PC-3 (cell line): ENCODE measurements at regions of chr6 and their contacts with region 1.

Region 1: DNA sequence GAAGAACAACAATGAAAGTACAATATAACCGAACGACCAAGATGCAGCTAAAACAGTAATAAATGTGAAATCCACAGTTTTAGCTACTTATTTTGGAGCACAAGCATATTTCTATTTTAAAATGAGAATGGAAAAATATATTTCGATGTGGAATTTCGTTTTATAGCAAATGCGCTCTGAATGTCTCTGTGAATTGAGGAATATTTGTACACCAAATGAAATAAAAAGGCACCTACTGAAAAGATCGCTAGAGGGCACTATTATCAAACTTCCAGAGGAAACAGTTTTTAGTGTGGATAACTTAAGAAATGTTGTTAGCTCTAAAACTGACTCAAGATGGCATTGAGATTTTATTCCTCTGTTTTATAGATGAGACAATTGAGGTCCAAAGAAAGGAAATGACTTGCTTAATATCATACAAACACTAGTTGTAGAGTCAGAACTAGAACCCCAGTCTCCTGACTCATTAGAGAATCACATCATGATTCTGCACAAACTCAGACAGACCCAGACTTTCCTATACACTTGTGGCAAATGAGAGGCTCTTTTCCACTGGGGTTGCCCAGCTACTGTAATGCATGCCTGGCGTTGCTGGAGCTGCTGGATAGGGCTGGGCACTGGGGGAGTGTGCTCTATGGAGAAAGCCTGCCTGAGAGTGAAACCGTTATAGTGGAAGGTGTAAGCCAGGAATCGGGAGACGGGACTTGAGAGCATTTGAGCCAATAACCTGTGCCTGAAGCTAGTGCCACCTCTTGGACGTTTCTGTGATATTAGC is 51.9 kb downstream of the GCLC start:
- DNase-seq: peak; percentile 84
- ATAC-seq: peak; percentile 72
- H3K4me3 ChIP-seq: peak overlapping the region; percentile 69
- H3K27ac ChIP-seq: no peak overlapping the region
- H3K4me1 ChIP-seq: peaks cover 33% of the 10 kb centered on the region
- H3K27me3 ChIP-seq: no peaks in the 10 kb centered on the region
- CTCF ChIP-seq: peak; percentile 88

Region 2: GRCh38 chr6:53527249-53527765 is 34.3 kb after region 1 on chr6:
- CTCF ChIA-PET with region 1: interaction called, 18 read pairs
- POLR2A ChIA-PET with region 1: no interaction called
- intact Hi-C with region 1: no loop called
- DNase-seq: no peak
- ATAC-seq: no peak
- H3K4me3 ChIP-seq: no peak overlapping the region
- H3K27ac ChIP-seq: no peak overlapping the region
- H3K4me1 ChIP-seq: peaks cover 22% of the 10 kb centered on the region
- H3K27me3 ChIP-seq: no peaks in the 10 kb centered on the region
- CTCF ChIP-seq: no peak

Region 3: DNA sequence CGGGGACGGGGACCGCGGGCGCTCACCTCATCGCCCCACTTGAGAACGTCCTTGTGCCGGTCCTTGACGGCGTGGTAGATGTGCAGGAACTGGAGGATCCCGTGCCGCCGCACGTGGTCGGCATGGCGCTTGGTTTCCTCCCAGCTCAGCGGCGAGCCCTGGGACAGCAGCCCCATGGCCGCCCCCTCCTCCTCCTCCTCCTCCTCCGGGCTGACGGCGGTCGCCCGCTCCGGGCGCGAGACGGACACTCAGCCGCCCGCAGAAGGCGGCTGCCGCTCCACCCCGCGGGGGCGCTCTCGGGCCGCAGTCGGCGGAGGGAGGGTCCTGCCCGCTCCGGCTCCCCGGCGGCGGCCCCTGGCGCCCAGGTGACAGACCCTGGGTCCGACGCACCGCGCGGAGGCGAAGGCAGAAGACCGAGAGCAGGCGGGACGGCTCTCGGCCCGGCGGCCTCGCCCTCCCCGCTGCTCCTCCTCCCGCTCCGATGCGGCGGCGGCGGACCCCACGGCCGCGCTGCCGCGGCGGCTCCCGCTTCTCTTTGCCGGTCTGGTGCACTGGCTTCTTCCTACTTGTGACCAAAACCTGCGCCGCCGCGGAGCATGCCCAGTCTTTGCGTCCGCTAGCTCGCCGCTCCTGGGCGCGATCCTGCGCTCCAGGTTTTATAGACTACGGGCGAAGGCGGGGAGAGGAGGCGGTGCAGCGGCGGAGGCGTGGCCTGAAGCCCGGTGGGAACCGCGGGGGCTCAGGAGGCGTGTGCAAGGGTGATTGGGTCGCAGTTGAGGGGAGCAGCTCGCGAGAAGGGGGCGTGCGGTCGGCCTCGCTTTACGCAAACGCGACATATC is 51.6 kb after region 1 on chr6 and contains the start of gene GCLC:
- CTCF ChIA-PET with region 1: interaction called, 7 read pairs
- POLR2A ChIA-PET with region 1: no interaction called
- intact Hi-C with region 1: loop called (anchors 1 kb)
- DNase-seq: peak; percentile 96
- ATAC-seq: peak; percentile 55
- H3K4me3 ChIP-seq: peak within 1 kb of the TSS; percentile 92
- H3K27ac ChIP-seq: peak within 1 kb of the TSS; percentile 56
- H3K4me1 ChIP-seq: peaks cover 42% of the 10 kb centered on the region
- H3K27me3 ChIP-seq: no peaks in the 10 kb centered on the region
- CTCF ChIP-seq: peak; percentile 65
- total RNA-seq, gene GCLC: 50.1 and 54.7 TPM in 2 replicates

Region 4: DNA sequence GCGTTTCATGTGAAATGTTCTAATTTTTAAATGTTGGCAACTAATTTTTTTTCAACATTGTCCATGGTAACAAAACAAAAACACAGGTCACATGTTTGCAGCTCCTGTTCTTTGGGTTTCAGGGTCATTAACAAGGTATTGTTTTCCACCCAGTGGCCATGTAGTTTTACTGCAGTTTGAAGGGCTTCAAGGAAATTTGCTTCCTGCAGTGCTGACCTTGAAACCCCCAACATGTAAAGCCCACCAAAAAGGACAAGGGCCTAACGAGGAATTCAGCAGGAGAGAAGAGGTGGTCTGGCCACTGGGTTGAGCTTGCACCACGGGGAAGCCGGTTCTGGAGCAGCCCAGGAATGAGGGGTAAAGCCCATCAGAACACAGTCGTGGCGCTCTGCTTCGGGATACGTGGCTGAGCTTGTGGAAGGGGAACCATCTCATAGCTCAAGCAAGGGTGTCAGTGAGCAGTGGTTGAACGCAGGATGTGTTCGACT is 186.4 kb after region 1 on chr6:
- CTCF ChIA-PET with region 1: interaction called, 13 read pairs
- POLR2A ChIA-PET with region 1: no interaction called
- intact Hi-C with region 1: loop called (anchors 1 kb)
- DNase-seq: peak; percentile 59
- ATAC-seq: peak; percentile 60; the same call in 1 of the 2 replicates
- H3K4me3 ChIP-seq: no peak overlapping the region
- H3K27ac ChIP-seq: no peak overlapping the region
- H3K4me1 ChIP-seq: peaks cover 1% of the 10 kb centered on the region
- H3K27me3 ChIP-seq: no peaks in the 10 kb centered on the region
- CTCF ChIP-seq: peak; percentile 72

Region 5: GRCh38 chr6:53718597-53719460 is 225.8 kb after region 1 on chr6:
- CTCF ChIA-PET with region 1: interaction called, 27 read pairs
- POLR2A ChIA-PET with region 1: interaction called, 10 read pairs
- intact Hi-C with region 1: loop called (anchors 2 kb)
- DNase-seq: peak; percentile 88
- ATAC-seq: peak; percentile 93
- H3K4me3 ChIP-seq: no peak overlapping the region
- H3K27ac ChIP-seq: no peak overlapping the region
- H3K4me1 ChIP-seq: peaks cover 15% of the 10 kb centered on the region
- H3K27me3 ChIP-seq: no peaks in the 10 kb centered on the region
- CTCF ChIP-seq: peak; percentile 94

Region 6: GRCh38 chr6:53725791-53726431 is 232.9 kb after region 1 on chr6:
- CTCF ChIA-PET with region 1: interaction called, 31 read pairs
- POLR2A ChIA-PET with region 1: no interaction called
- intact Hi-C with region 1: loop called (anchors 1 kb)
- DNase-seq: peak; percentile 83
- ATAC-seq: peak; percentile 83
- H3K4me3 ChIP-seq: no peak overlapping the region
- H3K27ac ChIP-seq: no peak overlapping the region
- H3K4me1 ChIP-seq: peaks cover 17% of the 10 kb centered on the region
- H3K27me3 ChIP-seq: no peaks in the 10 kb centered on the region
- CTCF ChIP-seq: peak; percentile 95